Calu3 (cell line): ENCODE measurements at regions of chr19 and their contacts with region 1.

Region 1: GRCh38 chr19:44903602-44904425 is 1.8 kb upstream of the APOE start:
- DNase-seq: peak; percentile 90
- H3K4me3 Mint-ChIP-seq: no peak overlapping the region
- H3K27ac Mint-ChIP-seq: peak overlapping the region; percentile 79
- H3K4me1 Mint-ChIP-seq: peaks cover 11% of the 10 kb centered on the region
- H3K27me3 Mint-ChIP-seq: peaks cover 49% of the 10 kb centered on the region
- CTCF ChIP-seq: peak; percentile 99

Region 2: GRCh38 chr19:44705502-44706010 is 198.3 kb before region 1 on chr19:
- CTCF ChIA-PET with region 1: interaction called, 14 read pairs
- intact Hi-C with region 1: no loop called
- DNase-seq: no peak
- H3K4me3 Mint-ChIP-seq: no peak overlapping the region
- H3K27ac Mint-ChIP-seq: no peak overlapping the region
- H3K4me1 Mint-ChIP-seq: no peaks in the 10 kb centered on the region
- H3K27me3 Mint-ChIP-seq: no peaks in the 10 kb centered on the region
- CTCF ChIP-seq: no peak

Region 3: GRCh38 chr19:44951179-44952159 is 47.7 kb after region 1 on chr19:
- CTCF ChIA-PET with region 1: interaction called, 3 read pairs
- intact Hi-C with region 1: loop called (anchors 1 kb)
- DNase-seq: peak; percentile 77
- H3K4me3 Mint-ChIP-seq: no peak overlapping the region
- H3K27ac Mint-ChIP-seq: no peak overlapping the region
- H3K4me1 Mint-ChIP-seq: no peaks in the 10 kb centered on the region
- H3K27me3 Mint-ChIP-seq: no peaks in the 10 kb centered on the region
- CTCF ChIP-seq: peak; percentile 94